Motor neuron (in vitro differentiated cells): ENCODE measurements at regions of chr7 and their contacts with region 1.

Region 1: DNA sequence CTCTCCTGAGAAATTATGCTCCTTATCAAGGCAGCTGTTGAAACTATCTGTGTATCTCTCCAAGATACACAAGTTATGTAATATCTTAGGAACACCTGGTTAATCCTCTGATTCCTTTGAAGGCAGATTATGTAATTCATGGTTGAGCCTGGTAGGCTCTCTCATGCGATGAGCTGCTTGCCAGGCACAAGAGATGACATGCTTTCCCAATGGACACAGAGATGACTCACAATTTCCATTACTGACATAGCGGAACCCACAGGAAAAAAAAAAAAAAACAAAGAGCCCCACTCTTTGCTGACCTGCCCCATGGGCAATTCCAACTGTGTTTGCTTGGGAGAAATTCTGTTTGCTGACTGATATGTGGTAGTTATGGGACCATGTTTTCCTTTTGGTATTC is 736.4 kb upstream of the PHF14 start:
- ATAC-seq: peak in 1 of 8 experiments; percentile 43
- H3K4me3 ChIP-seq: no peak overlapping the region
- H3K27ac ChIP-seq: no peak overlapping the region
- H3K4me1 ChIP-seq: no peaks in the 10 kb centered on the region

Region 2: GRCh38 chr7:9709216-9709615 is 528.1 kb before region 1 on chr7:
- in situ Hi-C with region 1: no loop called
- ATAC-seq: no peak
- H3K4me3 ChIP-seq: no peak overlapping the region
- H3K27ac ChIP-seq: no peak overlapping the region
- H3K4me1 ChIP-seq: no peaks in the 10 kb centered on the region

Region 3: GRCh38 chr7:10128748-10129147 is 108.6 kb before region 1 on chr7:
- in situ Hi-C with region 1: loop called in 1 of 9 experiments (anchors 25 kb)
- ATAC-seq: no peak
- H3K4me3 ChIP-seq: no peak overlapping the region
- H3K27ac ChIP-seq: no peak overlapping the region
- H3K4me1 ChIP-seq: peaks cover 0 to 2% of the 10 kb centered on the region in 2 donors